ENCODE measurements at regions of chr15 and their contacts with region 1.

Region 1: GRCh38 chr15:60798821-60799220 is 319.9 kb upstream of the ICE2 start:
- DNase-seq: peak; percentile 48
- CTCF ChIP-seq: no peak

Region 2: DNA sequence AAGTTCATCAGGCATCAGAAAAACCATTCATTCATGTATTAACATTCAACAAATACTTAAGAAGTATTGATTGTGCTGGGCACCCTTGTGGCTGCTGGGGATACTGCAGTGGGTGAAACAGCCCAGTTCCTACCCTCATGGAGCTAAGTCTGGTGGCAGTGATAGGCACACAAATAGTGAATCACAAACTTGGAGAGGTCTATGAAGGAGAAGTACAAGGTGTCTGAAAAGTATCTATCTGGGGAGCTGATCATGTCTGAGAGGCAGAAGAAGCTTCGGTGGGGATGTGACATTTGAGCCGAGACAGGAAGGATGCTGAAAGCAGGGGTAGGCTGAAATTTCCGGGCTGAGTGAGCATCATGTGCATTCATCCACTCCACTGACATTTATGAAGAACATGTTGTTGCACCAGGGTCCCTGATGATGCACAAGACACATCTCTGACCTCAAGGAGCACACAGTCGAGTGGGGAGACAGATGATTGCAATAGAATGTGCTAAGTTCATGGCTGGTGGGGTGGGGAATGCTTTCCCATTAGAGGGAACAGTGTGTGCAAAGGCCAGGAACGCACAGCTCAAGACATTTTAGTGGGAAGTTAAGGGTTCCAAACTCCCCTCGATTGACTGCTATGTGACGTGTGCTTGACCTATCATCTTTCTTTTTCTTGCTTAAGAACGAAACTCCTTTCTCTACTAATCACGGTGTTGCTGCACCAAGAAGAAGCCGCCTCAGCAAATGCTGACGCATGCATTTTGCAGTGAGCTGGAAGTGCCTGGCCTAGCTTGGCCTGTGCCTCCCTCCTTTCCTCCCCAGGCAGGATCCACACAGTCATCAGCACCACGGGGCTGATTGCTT is 10.8 kb before region 1 on chr15:
- CTCF ChIA-PET with region 1: interaction called, 10 read pairs
- POLR2A ChIA-PET with region 1: no interaction called
- DNase-seq: no peak
- CTCF ChIP-seq: peak; percentile 26

Region 3: DNA sequence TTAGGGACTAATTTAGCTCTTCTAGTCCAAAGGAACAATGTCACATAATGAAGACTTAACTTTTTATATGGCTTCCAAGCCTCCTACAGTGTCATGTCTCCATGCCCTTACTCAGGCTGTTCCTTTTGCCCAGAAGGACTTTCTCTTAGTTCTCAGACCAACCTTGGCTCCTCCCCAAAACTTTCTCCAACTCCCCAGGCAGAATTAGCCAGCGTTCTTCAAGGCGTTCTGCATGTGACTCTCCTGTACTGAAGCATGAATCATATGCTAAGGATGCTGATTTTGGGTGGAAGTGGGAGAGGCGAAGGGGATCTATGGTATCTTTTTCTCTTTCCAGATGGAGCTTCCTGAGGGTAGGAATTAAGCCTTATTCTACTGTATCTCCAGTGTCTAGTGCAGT is 15.2 kb after region 1 on chr15:
- CTCF ChIA-PET with region 1: interaction called, 11 read pairs
- POLR2A ChIA-PET with region 1: no interaction called
- DNase-seq: no peak
- CTCF ChIP-seq: no peak